CD4-positive, alpha-beta memory T cell (primary cell): ENCODE measurements at regions of chr6 and their contacts with region 1.

Region 1: DNA sequence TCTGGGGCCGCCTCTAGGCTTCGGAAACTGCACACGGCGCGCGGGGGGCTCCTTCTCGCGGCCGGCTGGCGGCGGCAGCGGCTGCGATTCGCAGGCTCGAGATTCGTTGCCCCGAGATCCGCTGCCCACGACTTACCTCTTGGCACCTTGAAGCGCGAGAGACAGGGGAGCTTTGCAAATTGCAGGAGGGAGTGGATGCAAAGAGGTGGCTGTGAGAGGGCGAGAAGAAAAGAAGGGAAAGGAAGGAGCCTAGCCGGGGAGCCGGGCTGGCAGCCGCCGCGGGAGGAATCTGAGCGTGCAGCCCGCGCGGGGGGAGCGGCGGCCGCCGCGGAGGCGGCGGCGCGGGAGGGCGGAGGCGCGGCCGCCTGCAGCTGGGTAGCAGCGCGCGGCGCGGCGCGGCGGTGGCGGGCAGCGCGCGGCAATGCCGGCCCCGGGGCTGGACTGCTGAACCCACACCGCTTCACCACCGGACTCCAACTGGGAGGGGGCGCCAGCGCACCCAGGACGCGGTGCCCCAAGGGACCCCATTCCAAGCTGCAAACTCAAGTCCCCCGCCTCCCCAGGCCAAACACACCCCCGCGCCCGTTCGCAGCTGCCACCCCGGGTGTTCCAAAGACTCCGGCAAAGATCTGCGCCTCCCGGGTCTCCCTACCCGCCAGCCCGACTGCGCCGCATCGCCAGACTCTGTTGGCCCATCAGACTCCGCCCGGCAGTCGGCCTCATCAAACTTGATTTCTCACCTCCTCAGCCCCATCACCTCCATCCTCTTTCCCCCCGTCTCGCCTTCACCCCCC is 44.2 kb upstream of the SUPT3H start:
- DNase-seq: peak; percentile 51 to 65 (median 61)
- H3K4me3 ChIP-seq: peak overlapping the region; percentile 66 to 86
- H3K4me3 Mint-ChIP-seq: peak overlapping the region; percentile 96 to 99 (median 98)
- H3K27ac ChIP-seq: peak overlapping the region; percentile 72
- H3K27ac Mint-ChIP-seq: peak overlapping the region; percentile 92 to 98 (median 96)
- H3K4me1 ChIP-seq: peaks cover 35% of the 10 kb centered on the region
- H3K4me1 Mint-ChIP-seq: peaks cover 26 to 58% (median 38%) of the 10 kb centered on the region in 4 donors
- H3K27me3 ChIP-seq: no peaks in the 10 kb centered on the region
- H3K27me3 Mint-ChIP-seq: peaks cover 3 to 5% of the 10 kb centered on the region in 2 donors

Region 2: DNA sequence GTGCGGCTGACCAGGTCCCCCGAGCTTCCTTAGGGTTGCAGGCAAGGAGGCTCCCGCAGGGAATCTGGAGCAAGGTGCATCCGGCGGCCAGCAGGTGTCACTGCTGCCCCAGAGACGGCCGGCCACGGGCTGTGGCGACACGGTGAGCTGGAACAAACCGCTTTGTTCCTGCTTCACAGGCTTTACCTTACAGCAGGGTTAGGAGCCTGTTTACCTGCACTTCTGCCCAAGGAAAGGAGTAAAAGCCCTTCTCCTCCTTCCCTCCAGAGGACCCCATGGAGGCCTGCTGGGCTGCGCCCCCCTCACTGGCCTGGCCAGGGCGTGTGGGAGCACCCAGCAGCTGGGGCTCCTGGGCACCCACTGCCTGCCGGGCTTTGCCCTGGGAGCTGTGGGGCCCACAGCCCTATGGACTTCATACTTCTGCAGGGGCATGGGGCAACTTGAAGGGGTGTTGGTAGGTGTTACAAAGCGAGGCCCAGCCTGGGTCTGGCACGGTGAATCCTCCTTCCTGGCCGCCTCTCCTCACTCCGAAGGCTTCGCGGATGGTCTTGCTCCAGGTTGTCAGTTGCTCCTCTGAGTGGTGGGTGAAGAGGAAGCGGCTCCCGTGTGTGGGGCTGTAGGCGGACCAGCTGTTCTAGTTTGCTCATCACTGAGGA is 946.0 kb before region 1 on chr6:
- CTCF ChIA-PET with region 1: interaction called, 3 read pairs
- POLR2A ChIA-PET with region 1: no interaction called
- intact Hi-C with region 1: loop called (anchors 5 kb)
- DNase-seq: peak; percentile 47 to 66 (median 63)
- H3K4me3 ChIP-seq: no peak overlapping the region
- H3K4me3 Mint-ChIP-seq: no peak overlapping the region
- H3K27ac ChIP-seq: no peak overlapping the region
- H3K27ac Mint-ChIP-seq: no peak overlapping the region
- H3K4me1 ChIP-seq: peaks cover 6% of the 10 kb centered on the region
- H3K4me1 Mint-ChIP-seq: peaks cover 0 to 5% (median 2%) of the 10 kb centered on the region in 4 donors
- H3K27me3 ChIP-seq: no peaks in the 10 kb centered on the region
- H3K27me3 Mint-ChIP-seq: peaks cover 2 to 3% of the 10 kb centered on the region in 2 donors

Region 3: GRCh38 chr6:44925100-44925739 is 496.7 kb before region 1 on chr6:
- CTCF ChIA-PET with region 1: no interaction called
- POLR2A ChIA-PET with region 1: interaction called, 3 read pairs
- intact Hi-C with region 1: loop called (anchors 2 kb)
- DNase-seq: peak; percentile 72 to 87 (median 82)
- H3K4me3 ChIP-seq: no peak overlapping the region
- H3K4me3 Mint-ChIP-seq: peak overlapping the region; percentile 8 to 64 (median 48)
- H3K27ac ChIP-seq: peak overlapping the region; percentile 72
- H3K27ac Mint-ChIP-seq: peak overlapping the region; percentile 83 to 95 (median 87)
- H3K4me1 ChIP-seq: peaks cover 69% of the 10 kb centered on the region
- H3K4me1 Mint-ChIP-seq: peaks cover 37 to 53% (median 45%) of the 10 kb centered on the region in 4 donors
- H3K27me3 ChIP-seq: no peaks in the 10 kb centered on the region
- H3K27me3 Mint-ChIP-seq: no peaks in the 10 kb centered on the region

Region 4: GRCh38 chr6:45377554-45378333 is 44.2 kb before region 1 on chr6 and contains the start of gene SUPT3H:
- CTCF ChIA-PET with region 1: interaction called, 10 read pairs
- POLR2A ChIA-PET with region 1: interaction called, 44 read pairs
- intact Hi-C with region 1: loop called (anchors 1 kb)
- DNase-seq: peak; percentile 88 to 96 (median 90)
- H3K4me3 ChIP-seq: peak within 1 kb of the TSS; percentile 72 to 96
- H3K4me3 Mint-ChIP-seq: peak within 1 kb of the TSS; percentile 93 to 99 (median 96)
- H3K27ac ChIP-seq: peak within 1 kb of the TSS; percentile 96
- H3K27ac Mint-ChIP-seq: peak within 1 kb of the TSS; percentile 95 to 99 (median 98)
- H3K4me1 ChIP-seq: peaks cover 17% of the 10 kb centered on the region
- H3K4me1 Mint-ChIP-seq: peaks cover 8 to 30% (median 19%) of the 10 kb centered on the region in 4 donors
- H3K27me3 ChIP-seq: no peaks in the 10 kb centered on the region
- H3K27me3 Mint-ChIP-seq: no peaks in the 10 kb centered on the region
- total RNA-seq, gene SUPT3H: 11.8 to 12.6 TPM

Region 5: GRCh38 chr6:45486736-45487135 is 64.8 kb after region 1 on chr6:
- CTCF ChIA-PET with region 1: no interaction called
- POLR2A ChIA-PET with region 1: interaction called, 4 read pairs
- intact Hi-C with region 1: loop called (anchors 5 kb)
- DNase-seq: no peak
- H3K4me3 ChIP-seq: no peak overlapping the region
- H3K4me3 Mint-ChIP-seq: peak overlapping the region in 4 of 8 donors; percentile 11 to 49 (median 26)
- H3K27ac ChIP-seq: no peak overlapping the region
- H3K27ac Mint-ChIP-seq: peak overlapping the region in 6 of 7 donors; percentile 4 to 66 (median 32)
- H3K4me1 ChIP-seq: peaks cover 37% of the 10 kb centered on the region
- H3K4me1 Mint-ChIP-seq: peaks cover 34 to 71% (median 64%) of the 10 kb centered on the region in 4 donors
- H3K27me3 ChIP-seq: no peaks in the 10 kb centered on the region
- H3K27me3 Mint-ChIP-seq: no peaks in the 10 kb centered on the region

Region 6: DNA sequence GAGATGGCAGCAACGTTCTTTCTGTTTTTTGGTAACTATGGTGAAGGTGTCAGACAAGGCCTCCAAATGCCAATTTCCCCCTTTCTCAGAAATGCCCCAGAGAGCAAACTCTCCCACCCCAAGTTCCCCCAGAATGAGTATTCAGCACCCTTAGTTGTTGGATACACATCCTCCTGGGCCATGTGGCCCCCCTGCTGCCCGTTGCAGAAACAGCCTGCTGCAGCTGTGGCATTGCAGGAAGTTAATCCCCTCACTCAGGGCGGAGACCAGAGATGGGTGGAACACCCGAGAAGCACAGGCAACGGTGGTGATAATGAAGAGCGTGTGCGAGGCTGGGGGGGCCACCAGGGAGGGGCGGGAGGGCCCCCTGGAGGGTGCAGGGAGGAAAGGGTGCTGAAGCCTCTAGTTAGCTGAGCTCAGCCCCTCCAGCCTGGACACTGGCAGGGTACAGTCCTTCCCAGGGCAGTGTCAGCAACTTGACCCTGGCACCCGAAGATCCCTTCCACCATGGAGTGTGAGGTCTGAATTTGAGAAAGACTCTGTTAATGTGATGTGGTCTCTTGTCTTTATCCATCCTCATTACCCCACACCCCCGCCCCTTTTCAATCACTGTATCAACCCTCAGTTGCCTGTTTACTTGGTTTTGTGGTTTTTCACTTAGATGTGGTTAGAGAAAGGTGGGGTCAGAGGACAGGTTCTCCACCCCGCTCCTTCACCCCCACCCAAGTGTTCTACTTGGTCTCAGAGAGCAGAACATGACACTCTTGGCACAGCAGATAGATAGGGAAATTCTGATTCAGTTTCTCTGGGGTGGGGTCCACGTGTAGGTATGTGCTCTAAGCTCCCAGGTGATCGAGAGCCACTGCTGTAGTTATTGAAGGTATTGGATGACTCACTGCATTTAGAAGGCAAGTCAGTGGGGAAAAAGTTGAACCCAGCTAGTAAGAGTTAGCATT is 164.6 kb after region 1 on chr6:
- CTCF ChIA-PET with region 1: interaction called, 7 read pairs
- POLR2A ChIA-PET with region 1: interaction called, 50 read pairs
- intact Hi-C with region 1: loop called (anchors 1 kb)
- DNase-seq: peak; percentile 89 to 93 (median 91)
- H3K4me3 ChIP-seq: peak overlapping the region in 1 of 2 donors; percentile 25
- H3K4me3 Mint-ChIP-seq: peak overlapping the region; percentile 70 to 94 (median 86)
- H3K27ac ChIP-seq: peak overlapping the region; percentile 17
- H3K27ac Mint-ChIP-seq: peak overlapping the region; percentile 92 to 98 (median 95)
- H3K4me1 ChIP-seq: peaks cover 66% of the 10 kb centered on the region
- H3K4me1 Mint-ChIP-seq: peaks cover 66 to 78% (median 73%) of the 10 kb centered on the region in 4 donors
- H3K27me3 ChIP-seq: no peaks in the 10 kb centered on the region
- H3K27me3 Mint-ChIP-seq: no peaks in the 10 kb centered on the region

Region 7: GRCh38 chr6:45854149-45854742 is 432.3 kb after region 1 on chr6:
- CTCF ChIA-PET with region 1: no interaction called
- POLR2A ChIA-PET with region 1: no interaction called
- intact Hi-C with region 1: no loop called
- DNase-seq: no peak
- H3K4me3 ChIP-seq: no peak overlapping the region
- H3K4me3 Mint-ChIP-seq: no peak overlapping the region
- H3K27ac ChIP-seq: no peak overlapping the region
- H3K27ac Mint-ChIP-seq: no peak overlapping the region
- H3K4me1 ChIP-seq: no peaks in the 10 kb centered on the region
- H3K4me1 Mint-ChIP-seq: no peaks in the 10 kb centered on the region
- H3K27me3 ChIP-seq: no peaks in the 10 kb centered on the region
- H3K27me3 Mint-ChIP-seq: peaks cover 1 to 21% of the 10 kb centered on the region in 2 donors

Region 8: GRCh38 chr6:46011241-46012085 is 589.6 kb after region 1 on chr6:
- CTCF ChIA-PET with region 1: no interaction called
- POLR2A ChIA-PET with region 1: no interaction called
- intact Hi-C with region 1: loop called (anchors 5 kb)
- DNase-seq: peak; percentile 72 to 92 (median 83)
- H3K4me3 ChIP-seq: peak overlapping the region; percentile 32 to 42
- H3K4me3 Mint-ChIP-seq: peak overlapping the region; percentile 67 to 99 (median 84)
- H3K27ac ChIP-seq: peak overlapping the region; percentile 71
- H3K27ac Mint-ChIP-seq: peak overlapping the region; percentile 95 to 98 (median 97)
- H3K4me1 ChIP-seq: peaks cover 56% of the 10 kb centered on the region
- H3K4me1 Mint-ChIP-seq: peaks cover 51 to 74% (median 62%) of the 10 kb centered on the region in 4 donors
- H3K27me3 ChIP-seq: no peaks in the 10 kb centered on the region
- H3K27me3 Mint-ChIP-seq: no peaks in the 10 kb centered on the region